CD4-positive, alpha-beta memory T cell (primary cell): ENCODE measurements at regions of chr12 and their contacts with region 1.

Region 1: DNA sequence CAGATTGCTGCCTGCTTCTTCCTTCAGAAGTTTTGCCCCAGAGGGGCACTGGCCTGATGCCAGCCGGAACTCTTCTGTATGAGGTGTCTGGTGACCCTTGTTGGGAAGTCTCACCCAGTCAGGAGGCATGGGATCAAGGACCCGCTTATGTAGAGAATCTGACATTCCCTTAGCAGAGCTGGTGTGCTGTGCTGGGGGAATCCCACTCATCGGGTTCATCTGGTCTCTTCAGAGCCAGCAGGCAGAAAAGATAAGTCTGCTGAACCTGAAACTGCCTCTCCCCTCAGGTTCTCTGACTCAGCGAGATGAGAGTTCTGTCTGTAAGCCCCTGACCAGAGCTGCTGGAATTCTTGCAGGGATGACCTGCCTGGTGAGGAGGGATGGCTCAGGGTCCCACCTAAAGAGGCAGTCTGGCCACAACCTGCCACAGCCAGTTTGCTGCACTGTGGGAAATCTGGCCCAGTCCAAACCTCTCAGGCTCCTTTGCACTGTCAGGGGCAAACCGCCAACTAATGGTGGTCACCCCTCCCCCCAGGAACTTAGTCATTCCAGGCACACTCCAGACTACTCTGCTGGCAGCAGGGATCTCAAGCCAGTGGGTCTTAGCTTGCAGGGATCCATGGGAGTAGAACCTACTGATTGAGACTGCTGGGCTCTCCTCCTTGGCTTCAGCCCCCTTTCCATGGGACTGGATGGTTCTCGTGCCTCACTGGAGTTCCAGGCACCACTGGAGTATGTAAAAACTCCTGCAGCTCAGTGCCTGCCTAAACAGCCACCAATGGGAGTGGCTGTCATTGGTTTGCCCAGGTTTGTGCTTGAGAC is 4.1 kb downstream of the CLEC2D start:
- DNase-seq: peak; percentile 46 to 81 (median 56)
- H3K4me3 ChIP-seq: peak overlapping the region; percentile 32 to 74
- H3K4me3 Mint-ChIP-seq: peak overlapping the region; percentile 87 to 95 (median 94)
- H3K27ac ChIP-seq: peak overlapping the region; percentile 79
- H3K27ac Mint-ChIP-seq: peak overlapping the region; percentile 79 to 98 (median 96)
- H3K4me1 ChIP-seq: peaks cover 72% of the 10 kb centered on the region
- H3K4me1 Mint-ChIP-seq: peaks cover 44 to 89% (median 61%) of the 10 kb centered on the region in 4 donors
- H3K27me3 ChIP-seq: no peaks in the 10 kb centered on the region
- H3K27me3 Mint-ChIP-seq: no peaks in the 10 kb centered on the region

Region 2: DNA sequence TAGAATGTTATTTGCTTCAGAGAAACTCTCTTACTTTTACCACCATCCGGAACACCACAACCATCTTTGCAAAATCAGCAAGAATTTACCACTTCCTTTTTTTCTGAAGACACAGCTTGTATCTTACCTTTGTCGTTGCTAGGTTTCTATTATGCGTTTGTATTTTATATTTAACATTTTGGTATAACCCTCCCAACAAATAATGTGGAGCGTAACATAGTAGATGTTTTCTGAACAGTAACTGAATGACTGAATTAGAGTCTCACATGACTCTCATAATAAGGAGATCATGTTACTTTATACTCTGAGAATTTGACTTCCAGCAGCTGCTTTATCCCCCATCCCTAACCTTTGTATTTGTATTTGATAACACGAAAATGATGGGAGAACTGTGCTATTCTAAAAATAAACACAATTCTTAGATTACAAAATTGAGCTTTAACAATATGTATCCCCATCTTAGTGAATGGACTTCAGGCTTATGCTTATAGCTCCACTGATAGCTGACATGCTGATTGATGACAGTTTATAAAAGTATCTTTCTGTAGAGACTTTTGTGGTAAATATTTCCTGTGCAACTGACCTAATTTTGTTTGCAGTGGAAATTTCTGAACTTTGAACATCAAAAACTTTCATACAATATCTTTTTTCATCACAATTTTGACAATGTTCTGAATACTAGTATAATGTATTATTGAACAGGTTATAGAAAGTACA is 58.0 kb before region 1 on chr12:
- CTCF ChIA-PET with region 1: interaction called, 3 read pairs
- POLR2A ChIA-PET with region 1: interaction called, 17 read pairs
- intact Hi-C with region 1: no loop called
- DNase-seq: peak; percentile 39 to 85 (median 76)
- H3K4me3 ChIP-seq: peak overlapping the region in 1 of 2 donors; percentile 46
- H3K4me3 Mint-ChIP-seq: peak overlapping the region; percentile 80 to 94 (median 88)
- H3K27ac ChIP-seq: peak overlapping the region; percentile 84
- H3K27ac Mint-ChIP-seq: peak overlapping the region; percentile 95 to 100 (median 98)
- H3K4me1 ChIP-seq: peaks cover 63% of the 10 kb centered on the region
- H3K4me1 Mint-ChIP-seq: peaks cover 61 to 97% (median 75%) of the 10 kb centered on the region in 4 donors
- H3K27me3 ChIP-seq: no peaks in the 10 kb centered on the region
- H3K27me3 Mint-ChIP-seq: no peaks in the 10 kb centered on the region

Region 3: GRCh38 chr12:9634177-9634803 is 39.3 kb before region 1 on chr12:
- CTCF ChIA-PET with region 1: interaction called, 7 read pairs
- POLR2A ChIA-PET with region 1: interaction called, 25 read pairs
- intact Hi-C with region 1: loop called (anchors 1 kb)
- DNase-seq: peak; percentile 76 to 77 (median 77)
- H3K4me3 ChIP-seq: no peak overlapping the region
- H3K4me3 Mint-ChIP-seq: peak overlapping the region in 6 of 8 donors; percentile 51 to 80 (median 61)
- H3K27ac ChIP-seq: no peak overlapping the region
- H3K27ac Mint-ChIP-seq: peak overlapping the region; percentile 22 to 97 (median 91)
- H3K4me1 ChIP-seq: peaks cover 70% of the 10 kb centered on the region
- H3K4me1 Mint-ChIP-seq: peaks cover 47 to 92% (median 73%) of the 10 kb centered on the region in 4 donors
- H3K27me3 ChIP-seq: no peaks in the 10 kb centered on the region
- H3K27me3 Mint-ChIP-seq: no peaks in the 10 kb centered on the region

Region 4: GRCh38 chr12:9662500-9662899 is 11.1 kb before region 1 on chr12:
- CTCF ChIA-PET with region 1: interaction called, 12 read pairs
- POLR2A ChIA-PET with region 1: interaction called, 881 read pairs
- intact Hi-C with region 1: no loop called
- DNase-seq: no peak
- H3K4me3 ChIP-seq: no peak overlapping the region
- H3K4me3 Mint-ChIP-seq: peak overlapping the region in 7 of 8 donors; percentile 37 to 72 (median 54)
- H3K27ac ChIP-seq: peak overlapping the region; percentile 41
- H3K27ac Mint-ChIP-seq: peak overlapping the region; percentile 68 to 94 (median 85)
- H3K4me1 ChIP-seq: peaks cover 91% of the 10 kb centered on the region
- H3K4me1 Mint-ChIP-seq: peaks cover 65 to 84% (median 76%) of the 10 kb centered on the region in 4 donors
- H3K27me3 ChIP-seq: no peaks in the 10 kb centered on the region
- H3K27me3 Mint-ChIP-seq: no peaks in the 10 kb centered on the region

Region 5: DNA sequence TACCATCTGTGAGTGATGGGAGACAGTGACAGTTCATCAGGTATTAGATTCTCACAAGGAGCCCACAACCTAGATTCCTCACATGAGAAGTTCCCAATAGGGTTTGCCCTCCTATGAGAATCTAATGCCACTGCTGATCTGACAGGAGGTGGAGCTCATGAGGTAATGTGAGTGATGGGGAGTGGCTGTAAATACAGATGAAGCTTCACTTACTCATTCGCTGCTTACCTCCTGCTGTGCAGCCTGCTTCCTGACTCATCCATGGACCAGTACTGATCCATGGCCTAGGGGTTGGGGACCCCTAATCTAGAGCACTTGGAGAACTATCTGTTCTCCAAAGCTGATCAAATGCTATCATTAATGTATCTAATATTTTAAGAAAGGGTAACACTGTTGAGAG is 13.6 kb after region 1 on chr12:
- CTCF ChIA-PET with region 1: interaction called, 3 read pairs
- POLR2A ChIA-PET with region 1: interaction called, 850 read pairs
- intact Hi-C with region 1: loop called (anchors 2 kb)
- DNase-seq: peak in 1 of 5 donors; percentile 50
- H3K4me3 ChIP-seq: no peak overlapping the region
- H3K4me3 Mint-ChIP-seq: peak overlapping the region in 5 of 8 donors; percentile 10 to 54 (median 44)
- H3K27ac ChIP-seq: no peak overlapping the region
- H3K27ac Mint-ChIP-seq: peak overlapping the region in 6 of 7 donors; percentile 29 to 83 (median 64)
- H3K4me1 ChIP-seq: peaks cover 73% of the 10 kb centered on the region
- H3K4me1 Mint-ChIP-seq: peaks cover 45 to 72% (median 65%) of the 10 kb centered on the region in 4 donors
- H3K27me3 ChIP-seq: no peaks in the 10 kb centered on the region
- H3K27me3 Mint-ChIP-seq: no peaks in the 10 kb centered on the region

Region 6: DNA sequence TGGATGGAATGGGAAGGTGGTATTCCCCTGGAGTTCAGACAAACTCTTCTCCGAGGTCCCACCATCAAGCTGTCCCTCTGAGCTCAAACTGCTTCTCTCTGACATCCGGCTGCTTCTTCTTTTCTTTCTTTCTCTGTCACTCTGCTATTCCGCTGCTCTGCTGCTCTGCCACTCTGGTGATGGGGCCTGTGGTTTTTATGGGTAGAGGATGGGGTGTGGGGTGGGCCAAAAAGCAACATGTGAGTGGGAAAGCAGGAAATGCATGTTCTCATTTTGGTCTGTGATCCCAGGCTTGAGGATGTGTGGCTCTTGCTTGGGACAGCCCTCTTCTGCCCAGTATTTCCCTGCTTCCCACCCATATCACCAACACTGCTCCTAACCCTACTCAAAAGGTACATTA is 28.6 kb after region 1 on chr12:
- CTCF ChIA-PET with region 1: interaction called, 4 read pairs
- POLR2A ChIA-PET with region 1: interaction called, 182 read pairs
- intact Hi-C with region 1: no loop called
- DNase-seq: peak; percentile 54 to 74 (median 66)
- H3K4me3 ChIP-seq: peak overlapping the region; percentile 4 to 12
- H3K4me3 Mint-ChIP-seq: peak overlapping the region; percentile 35 to 81 (median 75)
- H3K27ac ChIP-seq: peak overlapping the region; percentile 58
- H3K27ac Mint-ChIP-seq: peak overlapping the region; percentile 85 to 97 (median 93)
- H3K4me1 ChIP-seq: peaks cover 77% of the 10 kb centered on the region
- H3K4me1 Mint-ChIP-seq: peaks cover 67 to 84% (median 73%) of the 10 kb centered on the region in 4 donors
- H3K27me3 ChIP-seq: no peaks in the 10 kb centered on the region
- H3K27me3 Mint-ChIP-seq: no peaks in the 10 kb centered on the region

Region 7: GRCh38 chr12:9760699-9761418 is 87.2 kb after region 1 on chr12 and contains the start of gene CD69:
- CTCF ChIA-PET with region 1: interaction called, 4 read pairs
- POLR2A ChIA-PET with region 1: interaction called, 29 read pairs
- intact Hi-C with region 1: no loop called
- DNase-seq: peak; percentile 87 to 93 (median 90)
- H3K4me3 ChIP-seq: peak within 1 kb of the TSS; percentile 71 to 80
- H3K4me3 Mint-ChIP-seq: peak within 1 kb of the TSS; percentile 87 to 100 (median 98)
- H3K27ac ChIP-seq: peak within 1 kb of the TSS; percentile 98
- H3K27ac Mint-ChIP-seq: peak within 1 kb of the TSS; percentile 98 to 100 (median 100)
- H3K4me1 ChIP-seq: peaks cover 59% of the 10 kb centered on the region
- H3K4me1 Mint-ChIP-seq: peaks cover 42 to 70% (median 51%) of the 10 kb centered on the region in 4 donors
- H3K27me3 ChIP-seq: no peaks in the 10 kb centered on the region
- H3K27me3 Mint-ChIP-seq: no peaks in the 10 kb centered on the region
- total RNA-seq, gene CD69: 31.0 to 35.9 TPM

Region 8: DNA sequence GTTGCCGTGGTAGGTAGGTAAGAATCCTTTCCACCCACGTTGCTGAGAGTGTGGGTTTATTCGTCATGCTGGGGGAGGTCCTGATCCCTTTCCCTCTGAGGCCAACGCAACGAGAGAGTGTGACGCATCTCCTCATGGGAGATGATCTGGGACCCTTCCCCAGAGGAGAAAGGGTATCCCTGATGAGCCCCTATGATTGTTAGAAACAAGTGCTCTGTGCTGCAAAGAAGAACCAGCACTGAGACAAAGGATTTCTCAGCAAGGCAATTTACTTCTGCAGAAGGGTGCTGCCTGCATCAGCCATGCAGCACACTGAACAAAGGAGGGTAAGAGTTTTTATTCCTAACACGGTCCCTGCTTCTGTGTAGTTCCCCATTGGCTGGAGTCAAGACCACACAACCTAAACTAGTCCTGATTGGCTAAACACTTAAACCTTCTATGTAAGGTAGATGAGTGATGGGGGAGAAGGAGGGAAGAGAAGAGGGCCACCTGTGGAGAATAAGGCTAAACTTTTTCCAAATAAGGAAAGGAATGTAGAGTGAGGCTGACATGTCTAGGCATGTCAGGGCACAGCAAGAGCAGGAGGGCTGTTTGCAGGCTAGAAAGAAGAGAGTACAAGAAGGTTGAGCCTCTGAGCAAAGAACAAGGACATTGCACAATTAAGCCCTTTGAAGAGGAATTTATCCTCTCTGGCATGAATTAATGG is 237.3 kb after region 1 on chr12:
- CTCF ChIA-PET with region 1: no interaction called
- POLR2A ChIA-PET with region 1: no interaction called
- intact Hi-C with region 1: no loop called
- DNase-seq: no peak
- H3K4me3 ChIP-seq: no peak overlapping the region
- H3K4me3 Mint-ChIP-seq: no peak overlapping the region
- H3K27ac ChIP-seq: no peak overlapping the region
- H3K27ac Mint-ChIP-seq: peak overlapping the region in 1 of 7 donors; percentile 65
- H3K4me1 ChIP-seq: peaks cover 21% of the 10 kb centered on the region
- H3K4me1 Mint-ChIP-seq: peaks cover 18 to 28% (median 23%) of the 10 kb centered on the region in 4 donors
- H3K27me3 ChIP-seq: no peaks in the 10 kb centered on the region
- H3K27me3 Mint-ChIP-seq: peaks cover 0 to 2% of the 10 kb centered on the region in 2 donors